A549 (cell line): ENCODE measurements at regions of chr3 and their contacts with region 1.

Region 1: GRCh38 chr3:23668430-23668904 is 137.3 kb upstream of the UBE2E1 start:
- DNase-seq: peak; percentile 63 to 93
- ATAC-seq: peak; percentile 91 to 92
- H3K4me3 ChIP-seq: no peak overlapping the region
- H3K27ac ChIP-seq: peak overlapping the region; percentile 83 to 89
- H3K4me1 ChIP-seq: peaks cover 43% of the 10 kb centered on the region
- CTCF ChIP-seq: no peak
- EP300 ChIP-seq: peak; percentile 46 to 90; a peak in 3 of 5 replicates
- POLR2A ChIP-seq: no peak
- RAD21 ChIP-seq: peak; percentile 31 to 54

Region 2: GRCh38 chr3:23648326-23648995 is 20.0 kb before region 1 on chr3:
- CTCF ChIA-PET with region 1: interaction called, 13 read pairs
- POLR2A ChIA-PET with region 1: no interaction called
- DNase-seq: peak in 1 of 2 experiments; percentile 66
- ATAC-seq: peak; percentile 71 to 85; a peak in 5 of 6 replicates
- H3K4me3 ChIP-seq: no peak overlapping the region
- H3K27ac ChIP-seq: peak overlapping the region; percentile 45 to 55; a peak in 5 of 6 replicates
- H3K4me1 ChIP-seq: peaks cover 26% of the 10 kb centered on the region
- CTCF ChIP-seq: peak; percentile 27; the same call in 2 of the 3 replicates
- EP300 ChIP-seq: no peak
- POLR2A ChIP-seq: no peak
- RAD21 ChIP-seq: peak; percentile 55 to 66; a peak in 4 of 5 replicates

Region 3: GRCh38 chr3:23726811-23727548 is 58.5 kb after region 1 on chr3:
- CTCF ChIA-PET with region 1: no interaction called
- POLR2A ChIA-PET with region 1: no interaction called
- DNase-seq: no peak
- ATAC-seq: no peak
- H3K4me3 ChIP-seq: no peak overlapping the region
- H3K27ac ChIP-seq: no peak overlapping the region; a peak in 2 of 6 replicates
- H3K4me1 ChIP-seq: peaks cover 26% of the 10 kb centered on the region
- CTCF ChIP-seq: no peak
- EP300 ChIP-seq: no peak
- POLR2A ChIP-seq: no peak
- RAD21 ChIP-seq: no peak